SK-N-SH (cell line): ENCODE measurements at regions of chr19 and their contacts with region 1.

Region 1: DNA sequence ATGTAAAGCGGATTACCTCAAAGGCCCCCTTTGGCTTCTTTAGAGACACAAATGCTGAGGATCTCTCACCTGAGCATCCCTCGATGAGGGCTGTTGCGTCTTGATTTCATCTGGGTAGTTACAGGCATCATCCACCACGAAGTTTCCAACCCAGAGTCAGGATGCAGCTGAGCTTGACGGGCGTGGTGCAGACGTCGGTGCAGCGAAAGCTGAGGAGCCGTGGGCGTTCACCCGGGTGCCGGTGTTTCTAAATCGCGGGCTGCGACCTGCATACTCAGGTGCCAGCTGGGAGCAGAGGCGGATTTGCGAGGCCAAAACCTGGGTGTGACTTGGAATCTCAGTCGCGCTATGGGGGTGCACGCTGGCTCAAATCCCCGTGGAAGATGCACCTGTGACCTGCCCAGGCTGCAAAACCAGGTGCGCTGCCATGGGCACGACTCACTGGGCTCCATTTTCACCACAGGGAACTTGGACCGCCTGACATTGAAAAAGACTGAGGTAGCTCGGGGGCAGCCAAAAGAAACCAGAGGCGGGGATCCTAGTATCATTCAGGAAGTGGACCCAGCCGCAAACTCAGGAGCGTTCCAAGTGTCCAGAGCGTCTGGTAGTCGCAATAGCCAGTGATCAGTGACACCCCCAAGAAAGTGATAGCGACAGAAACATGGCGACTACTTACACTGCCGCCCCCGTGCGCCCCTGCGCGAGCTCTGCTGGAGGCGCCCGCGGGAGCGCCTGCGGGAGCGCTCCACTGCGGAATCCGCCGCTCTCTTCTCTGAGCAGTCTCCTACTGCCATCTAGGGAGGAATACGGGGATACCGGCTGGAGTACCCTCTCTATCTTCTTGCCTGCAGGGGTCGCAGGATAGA is 36.4 kb upstream of the IGFL4 start:
- DNase-seq: peak; percentile 90
- H3K4me3 ChIP-seq: peak overlapping the region; percentile 39 to 52
- H3K27ac ChIP-seq: no peak overlapping the region
- H3K4me1 ChIP-seq: peaks cover 8 to 20% of the 10 kb centered on the region in 2 experiments; a peak in 2 of 4 replicates
- H3K27me3 ChIP-seq: peaks cover 27% of the 10 kb centered on the region
- CTCF ChIP-seq: peak; percentile 99
- EP300 ChIP-seq: no peak
- RAD21 ChIP-seq: peak; percentile 83

Region 2: GRCh38 chr19:46021531-46022041 is 55.6 kb before region 1 on chr19:
- CTCF ChIA-PET with region 1: interaction called, 14 read pairs
- POLR2A ChIA-PET with region 1: no interaction called
- DNase-seq: no peak
- H3K4me3 ChIP-seq: no peak overlapping the region
- H3K27ac ChIP-seq: no peak overlapping the region
- H3K4me1 ChIP-seq: no peaks in the 10 kb centered on the region; a peak in 1 of 4 replicates
- H3K27me3 ChIP-seq: no peaks in the 10 kb centered on the region
- CTCF ChIP-seq: no peak
- EP300 ChIP-seq: no peak
- RAD21 ChIP-seq: no peak

Region 3: DNA sequence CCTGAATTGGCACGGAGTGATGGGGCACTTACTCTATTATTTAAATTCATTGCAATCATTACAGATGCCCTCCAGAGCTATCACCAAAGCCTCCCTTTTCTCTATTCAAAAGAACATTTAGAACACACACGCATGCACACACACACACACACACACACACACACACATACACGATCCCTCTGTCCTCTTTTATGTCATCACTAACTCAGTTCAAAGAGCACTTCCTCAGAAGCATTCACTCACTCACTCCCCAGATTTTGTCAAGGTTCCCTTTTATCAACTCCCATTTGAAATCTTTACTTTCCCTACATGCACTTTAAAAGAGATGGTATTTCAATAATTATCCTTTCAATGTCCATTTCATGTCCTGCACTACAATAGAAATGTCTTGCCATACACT is 14.0 kb before region 1 on chr19:
- CTCF ChIA-PET with region 1: interaction called, 11 read pairs
- POLR2A ChIA-PET with region 1: no interaction called
- DNase-seq: no peak
- H3K4me3 ChIP-seq: no peak overlapping the region
- H3K27ac ChIP-seq: no peak overlapping the region
- H3K4me1 ChIP-seq: peaks cover 0 to 4% of the 10 kb centered on the region in 2 experiments; a peak in 1 of 4 replicates
- H3K27me3 ChIP-seq: peaks cover 26% of the 10 kb centered on the region; the same call in 1 of the 2 replicates
- CTCF ChIP-seq: no peak
- EP300 ChIP-seq: no peak
- RAD21 ChIP-seq: no peak

Region 4: DNA sequence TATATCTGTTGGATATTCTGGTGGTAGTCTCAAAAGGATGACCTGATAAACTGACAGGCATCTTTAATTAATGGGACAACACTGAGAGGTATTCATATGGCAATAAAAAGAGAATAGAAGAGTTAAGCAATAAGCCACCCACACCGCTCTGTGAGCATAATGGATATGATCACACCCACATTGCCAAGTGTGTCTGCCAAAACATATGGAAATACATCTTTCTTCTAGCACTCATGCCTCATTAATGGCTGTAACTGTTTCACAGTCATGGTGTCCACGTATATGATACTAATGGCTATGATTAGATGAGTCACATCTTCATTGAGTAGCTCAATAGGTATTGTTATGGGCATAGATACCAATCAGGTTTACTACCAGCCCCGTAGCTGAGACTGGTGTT is 34.2 kb after region 1 on chr19:
- CTCF ChIA-PET with region 1: no interaction called
- POLR2A ChIA-PET with region 1: no interaction called
- DNase-seq: no peak
- H3K4me3 ChIP-seq: no peak overlapping the region
- H3K27ac ChIP-seq: no peak overlapping the region
- H3K4me1 ChIP-seq: 0 out of 4 replicates have a peak, but pooled peaks cover 0 to 5% of the 10 kb centered on the region in 2 experiments
- H3K27me3 ChIP-seq: no peaks in the 10 kb centered on the region; the same call in 1 of the 2 replicates
- CTCF ChIP-seq: no peak
- EP300 ChIP-seq: no peak
- RAD21 ChIP-seq: no peak

Region 5: DNA sequence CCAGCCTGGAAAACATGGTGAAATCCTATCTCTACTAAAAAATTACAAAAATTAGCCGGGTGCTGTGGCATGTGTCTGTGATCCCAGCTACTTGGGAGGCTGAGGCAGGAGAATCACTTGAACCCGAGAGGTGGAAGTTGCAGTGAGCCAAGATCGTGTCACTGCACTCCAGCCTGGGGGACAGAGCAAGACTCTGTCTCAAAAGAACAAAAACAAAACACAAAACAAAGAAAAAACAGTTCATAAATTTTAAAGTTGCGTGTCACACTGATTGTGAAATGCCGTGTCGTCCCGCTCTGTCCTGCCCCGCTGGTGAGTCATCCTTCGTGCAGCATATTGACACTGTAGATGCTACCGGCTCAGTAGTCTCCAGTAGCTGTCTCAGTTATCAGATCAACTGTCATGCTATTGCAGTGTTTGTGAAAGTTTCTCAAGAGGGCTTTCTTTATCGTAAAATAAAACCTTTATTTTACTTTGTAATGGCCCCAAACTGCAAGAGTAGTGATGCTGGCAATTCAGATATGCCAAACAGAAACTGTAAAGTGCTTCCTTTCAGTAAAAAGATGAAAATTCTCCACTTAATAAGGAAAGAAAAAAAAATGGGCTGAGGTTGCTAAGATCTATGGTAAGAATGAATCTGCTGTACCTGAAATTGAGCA is 115.9 kb after region 1 on chr19:
- CTCF ChIA-PET with region 1: interaction called, 29 read pairs
- POLR2A ChIA-PET with region 1: no interaction called
- DNase-seq: no peak
- H3K4me3 ChIP-seq: no peak overlapping the region
- H3K27ac ChIP-seq: no peak overlapping the region
- H3K4me1 ChIP-seq: no peaks in the 10 kb centered on the region
- H3K27me3 ChIP-seq: no peaks in the 10 kb centered on the region; the same call in 1 of the 2 replicates
- CTCF ChIP-seq: no peak
- EP300 ChIP-seq: no peak
- RAD21 ChIP-seq: no peak